ENCODE measurements at regions of chr10 and their contacts with region 1.

Region 1: DNA sequence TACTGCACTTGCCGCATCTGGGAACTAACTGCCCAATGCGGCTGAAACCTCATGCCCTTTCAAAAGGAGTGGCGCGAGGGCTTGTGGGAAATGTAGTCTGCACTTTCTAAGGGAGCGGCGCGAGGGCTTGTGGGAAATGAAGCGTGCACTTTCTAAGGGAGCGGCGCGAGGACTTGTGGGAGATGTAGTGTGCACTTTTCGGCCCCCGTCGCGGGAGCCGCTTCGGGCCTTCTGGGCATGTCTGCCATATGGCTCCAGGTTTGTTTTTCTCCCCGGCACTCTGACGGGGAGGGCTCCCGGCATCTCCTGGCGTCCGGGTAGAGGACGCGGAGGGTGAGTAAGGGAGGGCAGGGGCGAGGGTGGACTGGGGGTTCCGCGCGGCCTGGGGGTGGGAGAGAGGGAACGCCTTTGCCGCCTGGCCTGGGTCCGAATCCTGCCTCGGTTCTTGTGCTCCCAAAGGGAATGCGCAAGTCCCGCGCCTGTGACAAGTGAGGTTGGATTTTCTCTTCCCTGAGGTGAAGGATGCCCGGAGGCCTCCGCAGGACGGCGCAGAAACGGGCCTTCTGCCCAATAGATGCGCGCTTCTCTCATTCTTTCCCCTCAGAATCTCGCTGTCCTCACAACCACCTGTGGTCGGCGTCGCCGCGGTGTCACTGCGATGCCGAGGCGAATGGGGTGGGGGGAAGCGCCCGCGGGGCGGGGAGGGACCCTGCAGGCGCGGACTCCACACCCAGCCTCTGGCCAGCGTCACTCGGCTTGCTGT is at the start of gene ZNF37A:
- DNase-seq: peak; percentile 95
- H3K4me3 Mint-ChIP-seq: peak within 1 kb of the TSS; percentile 85
- H3K27ac Mint-ChIP-seq: peak within 1 kb of the TSS; percentile 87
- H3K4me1 Mint-ChIP-seq: peaks cover 33% of the 10 kb centered on the region
- H3K27me3 Mint-ChIP-seq: no peaks in the 10 kb centered on the region
- total RNA-seq, gene ZNF37A: 15.5 to 18.8 TPM

Region 2: DNA sequence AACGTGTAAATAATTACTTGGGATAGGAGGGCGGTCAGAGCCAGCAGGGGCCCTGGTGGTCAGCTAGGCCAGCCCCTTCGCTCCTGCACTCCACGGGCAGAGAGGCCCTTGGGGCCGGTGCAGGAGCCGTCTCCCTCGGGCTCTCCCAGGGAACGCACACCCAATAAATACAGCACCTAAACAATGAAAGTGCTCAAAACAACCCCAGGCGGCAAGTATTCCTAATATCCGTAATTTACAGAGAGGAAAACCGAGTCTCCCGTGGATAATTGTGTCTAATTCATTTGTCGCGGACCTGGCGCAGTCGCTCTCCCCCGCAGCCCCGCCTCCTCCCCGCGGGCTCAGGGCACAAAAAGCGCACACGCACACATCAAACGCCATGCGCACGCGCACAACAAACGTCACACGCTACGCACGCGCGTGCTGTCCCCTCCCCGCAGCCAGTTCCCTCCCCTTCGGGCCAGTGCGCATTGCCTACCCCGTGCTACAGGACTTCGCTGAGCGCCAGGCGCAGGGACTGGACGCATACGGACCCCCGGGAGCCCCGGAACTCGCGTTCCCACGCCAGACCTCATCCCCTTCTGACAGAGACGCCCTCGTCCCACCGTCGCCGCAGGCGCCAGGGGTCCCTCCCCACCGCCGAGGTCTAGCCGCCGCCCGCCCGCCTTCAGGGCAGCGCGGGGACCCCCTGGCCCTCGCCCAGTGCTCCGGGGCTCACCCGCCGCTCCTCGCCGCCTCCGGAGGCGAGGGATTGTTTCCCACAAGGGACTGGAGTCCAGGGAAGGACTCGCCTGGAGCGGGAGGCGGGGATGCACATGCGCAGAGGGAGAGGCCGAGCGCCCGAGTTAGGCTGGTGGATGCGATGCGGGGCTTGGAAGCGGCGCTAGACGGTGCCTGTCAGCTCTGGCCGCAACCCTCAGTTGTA is 236.8 kb before region 1 on chr10 and contains the start of gene ZNF248:
- CTCF ChIA-PET with region 1: no interaction called
- intact Hi-C with region 1: loop called (anchors 2 kb)
- DNase-seq: peak; percentile 94
- H3K4me3 Mint-ChIP-seq: peak within 1 kb of the TSS; percentile 92
- H3K27ac Mint-ChIP-seq: peak within 1 kb of the TSS; percentile 97
- H3K4me1 Mint-ChIP-seq: peaks cover 30% of the 10 kb centered on the region
- H3K27me3 Mint-ChIP-seq: no peaks in the 10 kb centered on the region
- total RNA-seq, gene ZNF248: 4.6 to 5.5 TPM

Region 3: DNA sequence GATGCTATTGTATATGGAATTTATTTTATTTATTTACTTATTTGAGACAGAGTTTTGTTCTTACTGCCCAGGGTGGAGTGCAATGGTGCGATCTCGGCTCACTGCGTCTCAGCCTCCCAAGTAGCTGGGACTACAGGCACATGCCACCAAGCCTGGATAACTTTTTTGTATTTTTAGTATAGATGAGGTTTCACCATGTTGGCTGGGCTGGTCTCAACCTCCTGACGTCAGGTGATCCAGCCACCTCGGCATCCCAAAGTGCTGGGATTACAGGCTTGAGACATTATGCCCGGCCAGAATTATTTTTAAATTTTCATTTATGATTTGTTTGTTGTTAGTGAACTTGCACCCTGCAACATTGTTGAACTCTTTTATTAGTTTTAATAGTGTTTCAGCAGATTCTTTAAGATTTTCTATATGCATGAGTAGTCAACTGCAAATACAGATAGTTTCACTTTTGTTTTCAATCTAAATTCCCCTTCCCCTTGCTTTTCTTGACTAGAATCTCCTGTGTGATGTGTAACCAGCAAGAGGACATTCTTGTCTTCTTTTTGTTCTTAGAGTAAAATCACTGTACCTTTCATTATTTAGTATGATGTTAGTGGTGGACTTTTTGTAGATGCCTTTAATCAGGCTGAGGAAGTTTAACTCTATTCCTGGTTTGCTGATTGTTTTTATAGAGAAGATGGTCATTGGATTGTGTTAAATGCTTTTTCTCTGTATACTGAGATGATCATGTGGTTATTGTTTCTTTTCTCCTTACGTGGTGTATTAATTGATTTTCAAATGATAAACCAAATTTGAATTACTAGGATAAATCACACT is 56.0 kb before region 1 on chr10:
- CTCF ChIA-PET with region 1: no interaction called
- intact Hi-C with region 1: loop called (anchors 2 kb)
- DNase-seq: no peak
- H3K4me3 Mint-ChIP-seq: peak overlapping the region; percentile 60
- H3K27ac Mint-ChIP-seq: peak overlapping the region; percentile 87
- H3K4me1 Mint-ChIP-seq: peaks cover 28% of the 10 kb centered on the region
- H3K27me3 Mint-ChIP-seq: no peaks in the 10 kb centered on the region